WTC11 (cell line): ENCODE measurements at regions of chr1 and their contacts with region 1.

Region 1: GRCh38 chr1:24586970-24587820 is 31.3 kb downstream of the NCMAP start:
- DNase-seq: no peak
- ATAC-seq: peak; percentile 88
- H3K4me3 Mint-ChIP-seq: no peak overlapping the region
- H3K27ac Mint-ChIP-seq: no peak overlapping the region
- H3K4me1 Mint-ChIP-seq: peaks cover 5% of the 10 kb centered on the region
- H3K27me3 Mint-ChIP-seq: no peaks in the 10 kb centered on the region
- CTCF ChIP-seq: peak; percentile 71

Region 2: DNA sequence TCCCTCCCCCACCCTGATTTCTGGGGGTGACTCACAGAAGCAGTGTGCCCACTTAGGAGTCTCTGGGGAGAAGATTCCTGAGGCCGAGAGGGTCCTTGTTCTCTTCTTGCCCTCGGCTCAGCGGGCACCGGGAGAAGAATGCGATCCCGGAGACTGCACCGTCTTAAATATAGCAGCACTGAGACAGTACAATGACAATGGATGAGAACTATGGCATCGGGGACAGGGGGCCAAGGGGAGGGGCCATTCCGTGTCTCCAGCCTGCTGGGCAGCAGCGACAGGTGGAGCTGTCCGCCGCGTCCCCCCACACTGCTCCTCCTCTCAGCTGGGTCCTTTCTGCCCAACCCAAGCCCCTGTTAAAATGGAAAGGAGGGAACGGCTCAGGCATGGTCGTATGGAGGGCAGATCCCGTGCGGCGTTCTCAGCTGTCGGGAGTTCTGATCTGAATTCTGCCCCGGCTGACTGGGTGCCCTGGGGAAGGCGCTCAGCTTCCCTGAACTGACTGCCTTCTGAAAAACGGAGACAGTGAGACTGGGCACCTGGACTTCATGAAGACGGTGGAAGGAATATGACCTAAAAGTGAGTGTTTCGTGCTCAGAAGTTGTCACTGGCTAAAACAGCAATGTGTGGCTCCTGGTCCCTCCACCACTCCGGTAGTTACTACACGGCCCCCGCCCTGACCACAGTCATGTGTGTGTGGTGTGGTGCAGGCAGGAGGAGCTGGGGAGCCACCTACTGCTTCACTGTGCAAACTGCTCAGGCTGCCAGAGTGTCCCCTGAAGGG is 475.0 kb before region 1 on chr1 and contains the start of gene MYOM3:
- CTCF ChIA-PET with region 1: no interaction called
- POLR2A ChIA-PET with region 1: no interaction called
- DNase-seq: peak; percentile 65
- ATAC-seq: peak; percentile 88
- H3K4me3 Mint-ChIP-seq: peak within 1 kb of the TSS; percentile 29
- H3K27ac Mint-ChIP-seq: no peak within 1 kb of the TSS; the same call in none of the 2 replicates
- H3K4me1 Mint-ChIP-seq: peaks cover 32% of the 10 kb centered on the region
- H3K27me3 Mint-ChIP-seq: no peaks in the 10 kb centered on the region
- CTCF ChIP-seq: no peak
- total RNA-seq, gene MYOM3: 0.13 to 0.16 TPM (median 0.14 TPM) in 3 replicates

Region 3: GRCh38 chr1:24253569-24253968 is 333.6 kb before region 1 on chr1:
- CTCF ChIA-PET with region 1: no interaction called
- POLR2A ChIA-PET with region 1: no interaction called
- DNase-seq: peak; percentile 28
- ATAC-seq: peak; percentile 90
- H3K4me3 Mint-ChIP-seq: no peak overlapping the region
- H3K27ac Mint-ChIP-seq: no peak overlapping the region
- H3K4me1 Mint-ChIP-seq: no peaks in the 10 kb centered on the region
- H3K27me3 Mint-ChIP-seq: no peaks in the 10 kb centered on the region
- CTCF ChIP-seq: no peak

Region 4: DNA sequence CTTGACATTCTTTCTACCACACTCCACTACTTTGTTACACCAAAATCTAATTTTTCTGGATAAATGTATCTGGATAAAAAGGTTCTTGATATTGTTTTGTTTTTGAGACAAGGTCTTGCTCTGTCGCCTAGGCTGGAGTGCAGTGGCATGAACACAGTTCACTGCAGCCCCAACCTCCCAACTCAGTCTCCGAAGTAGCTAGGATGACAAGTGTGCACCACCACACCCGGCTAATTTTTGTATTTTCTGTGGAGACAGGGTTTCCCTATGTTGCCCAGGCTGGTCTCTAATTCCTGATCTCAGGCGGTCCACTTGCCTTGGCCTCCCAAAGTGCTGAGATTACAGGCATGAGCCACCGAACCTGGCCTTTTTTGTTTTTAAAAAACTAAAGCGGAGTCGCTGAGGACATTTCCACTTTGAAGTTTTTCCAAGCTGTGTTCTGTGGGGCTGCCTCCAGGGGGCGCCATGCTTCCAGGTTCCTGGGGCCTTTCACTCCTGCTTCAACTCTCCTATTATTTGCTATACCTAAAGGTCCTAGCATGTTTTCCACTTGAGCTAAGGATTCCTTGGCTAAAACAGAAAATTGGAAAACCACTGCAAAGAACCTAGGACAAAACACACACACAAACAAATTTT is 45.4 kb before region 1 on chr1:
- CTCF ChIA-PET with region 1: interaction called, 40 read pairs
- POLR2A ChIA-PET with region 1: no interaction called
- DNase-seq: peak; percentile 57
- ATAC-seq: no peak
- H3K4me3 Mint-ChIP-seq: no peak overlapping the region
- H3K27ac Mint-ChIP-seq: peak overlapping the region; percentile 57; the same call in 1 of the 2 replicates
- H3K4me1 Mint-ChIP-seq: peaks cover 26% of the 10 kb centered on the region
- H3K27me3 Mint-ChIP-seq: no peaks in the 10 kb centered on the region
- CTCF ChIP-seq: peak; percentile 92

Region 5: GRCh38 chr1:24558902-24559791 is 28.0 kb before region 1 on chr1:
- CTCF ChIA-PET with region 1: interaction called, 34 read pairs
- POLR2A ChIA-PET with region 1: no interaction called
- DNase-seq: peak; percentile 68
- ATAC-seq: peak; percentile 90
- H3K4me3 Mint-ChIP-seq: no peak overlapping the region
- H3K27ac Mint-ChIP-seq: no peak overlapping the region
- H3K4me1 Mint-ChIP-seq: peaks cover 23% of the 10 kb centered on the region
- H3K27me3 Mint-ChIP-seq: peaks cover 34% of the 10 kb centered on the region
- CTCF ChIP-seq: no peak

Region 6: DNA sequence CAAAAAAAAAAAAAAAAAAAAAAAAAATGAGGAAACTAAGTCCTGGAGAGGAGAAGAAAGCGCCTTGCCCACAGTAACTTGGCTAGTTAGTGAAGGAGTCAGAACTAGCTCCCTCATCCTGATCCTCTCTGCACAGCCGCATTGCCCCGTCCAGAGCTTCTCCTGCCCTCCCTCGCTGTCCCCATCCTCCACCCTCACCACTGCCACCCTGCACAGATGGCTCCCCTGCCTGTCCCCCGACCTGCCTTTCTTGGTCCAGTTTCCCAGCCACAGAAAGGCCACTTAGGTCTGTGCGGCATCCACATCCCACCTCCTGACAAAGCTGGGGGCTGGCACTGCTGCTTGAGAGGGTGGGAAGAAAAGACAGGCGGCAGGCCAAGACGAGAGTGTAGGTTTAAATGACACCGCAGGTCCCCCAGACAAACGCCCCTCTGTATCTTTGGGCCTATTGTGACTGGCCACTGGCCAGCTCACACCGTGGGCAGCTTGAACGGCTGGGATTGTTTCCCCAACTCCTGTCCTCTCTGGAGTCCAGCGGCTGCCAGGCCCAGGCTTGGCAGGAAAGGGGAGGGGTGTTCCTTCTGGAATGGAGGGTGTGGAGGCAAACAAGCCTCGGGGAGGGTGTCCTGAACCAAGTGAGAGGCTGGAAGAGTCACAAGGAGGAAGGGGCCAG is 11.1 kb before region 1 on chr1:
- CTCF ChIA-PET with region 1: interaction called, 26 read pairs
- POLR2A ChIA-PET with region 1: interaction called, 3 read pairs
- DNase-seq: no peak
- ATAC-seq: no peak
- H3K4me3 Mint-ChIP-seq: no peak overlapping the region
- H3K27ac Mint-ChIP-seq: peak overlapping the region; percentile 68; the same call in 1 of the 2 replicates
- H3K4me1 Mint-ChIP-seq: no peaks in the 10 kb centered on the region
- H3K27me3 Mint-ChIP-seq: no peaks in the 10 kb centered on the region
- CTCF ChIP-seq: no peak

Region 7: GRCh38 chr1:24635195-24635843 is 48.1 kb after region 1 on chr1:
- CTCF ChIA-PET with region 1: interaction called, 12 read pairs
- POLR2A ChIA-PET with region 1: no interaction called
- DNase-seq: no peak
- ATAC-seq: peak; percentile 97
- H3K4me3 Mint-ChIP-seq: no peak overlapping the region
- H3K27ac Mint-ChIP-seq: no peak overlapping the region
- H3K4me1 Mint-ChIP-seq: peaks cover 7% of the 10 kb centered on the region; the same call in 1 of the 2 replicates
- H3K27me3 Mint-ChIP-seq: peaks cover 4% of the 10 kb centered on the region
- CTCF ChIP-seq: no peak